ENCODE measurements at regions of chr17 and their contacts with region 1.

Region 1: GRCh38 chr17:1573916-1574696 is 11.5 kb upstream of the PITPNA start:
- ATAC-seq: peak; percentile 20 to 81 (median 67)
- H3K4me3 ChIP-seq: no peak overlapping the region
- H3K27ac ChIP-seq: no peak overlapping the region
- H3K4me1 ChIP-seq: no peaks in the 10 kb centered on the region

Region 2: GRCh38 chr17:1618384-1618783 is 44.3 kb after region 1 on chr17:
- in situ Hi-C with region 1: no loop called
- ATAC-seq: no peak
- H3K4me3 ChIP-seq: no peak overlapping the region
- H3K27ac ChIP-seq: no peak overlapping the region
- H3K4me1 ChIP-seq: no peaks in the 10 kb centered on the region

Region 3: DNA sequence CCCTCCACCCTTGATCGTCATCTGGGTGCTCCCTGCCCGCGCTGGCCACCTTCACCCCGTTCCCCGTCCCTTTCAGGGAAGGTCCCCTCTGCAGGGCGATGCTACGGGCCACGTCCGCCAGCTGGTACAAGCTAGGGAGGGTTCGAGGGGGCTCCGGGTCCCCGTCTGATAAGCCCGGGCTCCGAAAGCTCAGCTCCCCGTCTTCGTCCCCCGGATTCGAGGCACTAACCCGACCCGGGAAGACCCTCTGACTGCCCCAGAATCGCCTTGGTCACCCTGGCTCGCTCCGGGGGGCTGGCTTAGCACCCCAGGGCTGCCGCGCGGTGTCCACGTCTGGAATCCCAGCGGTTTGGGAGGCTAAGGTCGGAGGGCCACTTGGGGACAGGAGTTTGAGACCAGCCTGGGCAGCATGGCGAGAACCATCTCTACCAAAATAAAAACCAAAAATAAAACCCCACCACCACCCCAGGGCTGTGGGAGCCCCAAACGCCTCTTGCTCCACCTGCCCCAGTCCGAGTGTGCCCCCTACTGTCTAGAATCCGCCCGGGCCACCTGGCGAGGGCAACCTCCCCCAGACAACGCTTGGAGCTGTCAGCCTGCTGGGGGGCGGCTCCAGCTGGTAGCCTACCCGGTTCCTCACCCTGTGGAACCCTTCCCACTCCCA is 55.7 kb after region 1 on chr17:
- in situ Hi-C with region 1: loop called in 1 of 9 experiments (anchors 10 kb)
- ATAC-seq: no peak
- H3K4me3 ChIP-seq: peak overlapping the region; percentile 56 to 89 (median 68)
- H3K27ac ChIP-seq: peak overlapping the region; percentile 92
- H3K4me1 ChIP-seq: peaks cover 20% of the 10 kb centered on the region in 2 donors

Region 4: GRCh38 chr17:1673041-1673785 is 99.1 kb after region 1 on chr17:
- in situ Hi-C with region 1: no loop called
- ATAC-seq: peak in 4 of 8 experiments; percentile 10 to 30 (median 14)
- H3K4me3 ChIP-seq: no peak overlapping the region
- H3K27ac ChIP-seq: no peak overlapping the region
- H3K4me1 ChIP-seq: no peaks in the 10 kb centered on the region

Measured in motor neuron (in vitro differentiated cells).